Dendritic cell treated with granulocyte-macrophage colony-stimulating factor and Interleukin-4, amounts not matched to agents 40 ng/mL and 50 ng/mL, for 4 days (primary cell): ENCODE measurements at regions of chr1 and their contacts with region 1.

Region 1: GRCh38 chr1:81512252-81513003 is 288.3 kb upstream of the ADGRL2 start:
- H3K4me3 Mint-ChIP-seq: no peak overlapping the region
- H3K27ac Mint-ChIP-seq: no peak overlapping the region
- H3K4me1 Mint-ChIP-seq: no peaks in the 10 kb centered on the region
- H3K27me3 Mint-ChIP-seq: no peaks in the 10 kb centered on the region

Region 2: DNA sequence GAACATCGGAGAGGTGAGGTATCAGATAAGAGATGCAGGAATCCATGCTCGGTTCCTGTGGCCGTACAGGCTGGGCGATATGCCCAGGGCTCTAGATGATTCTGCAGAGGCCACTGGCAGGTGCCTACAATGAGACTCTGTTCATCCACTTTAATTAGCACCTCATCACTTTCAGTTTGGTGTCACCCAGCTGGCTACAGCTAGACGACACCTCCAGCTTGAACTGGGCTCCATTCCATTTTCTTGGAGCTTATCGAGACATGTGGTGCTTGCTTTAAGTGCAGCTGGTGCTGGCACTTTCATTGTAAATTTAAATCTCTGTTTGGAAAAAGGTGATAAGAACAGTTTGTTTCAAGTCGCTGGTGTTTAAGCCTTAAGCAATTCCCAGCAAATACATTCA is 34.2 kb before region 1 on chr1:
- intact Hi-C with region 1: loop called (anchors 1 kb)
- H3K4me3 Mint-ChIP-seq: no peak overlapping the region
- H3K27ac Mint-ChIP-seq: no peak overlapping the region
- H3K4me1 Mint-ChIP-seq: no peaks in the 10 kb centered on the region
- H3K27me3 Mint-ChIP-seq: no peaks in the 10 kb centered on the region